ENCODE measurements at regions of chr1 and their contacts with region 1.

Region 1: DNA sequence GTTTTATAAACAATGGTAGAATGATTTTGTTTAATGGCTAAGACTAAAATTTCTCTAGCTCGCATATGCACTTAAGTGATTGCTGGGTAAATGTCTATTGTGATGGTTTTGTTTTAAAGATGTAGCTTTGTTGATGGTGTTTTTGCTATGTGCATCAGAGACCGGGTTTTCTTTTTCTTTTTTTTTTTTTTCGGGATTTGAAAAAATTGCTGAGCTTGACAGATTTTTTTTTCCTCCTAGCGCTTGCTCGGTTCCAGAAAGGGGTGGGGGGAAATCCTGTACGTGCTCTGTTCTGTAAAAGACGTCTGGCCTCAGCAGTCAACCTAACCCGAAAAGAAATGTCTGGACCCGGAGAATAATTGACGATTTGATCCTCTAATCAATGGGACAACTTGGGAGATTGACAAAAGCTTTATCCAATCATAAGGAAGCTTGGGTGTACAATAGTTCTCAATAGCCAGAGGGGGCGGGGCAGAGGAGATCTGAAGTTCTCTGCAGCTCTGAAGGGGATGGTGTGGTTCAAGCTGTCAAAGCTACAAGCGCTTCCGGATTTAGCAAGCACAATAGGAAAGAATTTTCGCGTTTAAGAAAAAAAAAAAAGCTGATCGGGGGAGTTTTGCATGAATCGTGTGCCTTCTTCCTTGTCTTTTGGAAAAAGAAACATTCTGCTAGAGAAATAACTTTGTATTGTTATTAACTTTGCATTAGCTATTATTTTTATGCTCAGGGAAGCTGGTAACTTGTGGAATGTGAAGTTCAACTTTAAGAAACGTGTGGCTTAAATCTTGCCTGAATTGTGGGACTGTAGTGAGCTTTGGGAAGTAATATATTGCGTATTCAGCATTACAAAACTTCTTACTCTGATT is 4.5 kb upstream of the NFIA start:
- DNase-seq: peak; percentile 100
- ATAC-seq: peak; percentile 62
- H3K4me3 ChIP-seq: peak overlapping the region; percentile 50 to 68
- H3K27ac ChIP-seq: peak overlapping the region; percentile 81; the same call in 1 of the 2 replicates
- H3K4me1 ChIP-seq: peaks cover 35 to 52% of the 10 kb centered on the region in 2 experiments
- H3K27me3 ChIP-seq: no peaks in the 10 kb centered on the region
- CTCF ChIP-seq: no peak
- POLR2A ChIP-seq: no peak
- RAD21 ChIP-seq: 0 out of 2 replicates have a peak, but pooled peaks have one; percentile 13

Region 2: DNA sequence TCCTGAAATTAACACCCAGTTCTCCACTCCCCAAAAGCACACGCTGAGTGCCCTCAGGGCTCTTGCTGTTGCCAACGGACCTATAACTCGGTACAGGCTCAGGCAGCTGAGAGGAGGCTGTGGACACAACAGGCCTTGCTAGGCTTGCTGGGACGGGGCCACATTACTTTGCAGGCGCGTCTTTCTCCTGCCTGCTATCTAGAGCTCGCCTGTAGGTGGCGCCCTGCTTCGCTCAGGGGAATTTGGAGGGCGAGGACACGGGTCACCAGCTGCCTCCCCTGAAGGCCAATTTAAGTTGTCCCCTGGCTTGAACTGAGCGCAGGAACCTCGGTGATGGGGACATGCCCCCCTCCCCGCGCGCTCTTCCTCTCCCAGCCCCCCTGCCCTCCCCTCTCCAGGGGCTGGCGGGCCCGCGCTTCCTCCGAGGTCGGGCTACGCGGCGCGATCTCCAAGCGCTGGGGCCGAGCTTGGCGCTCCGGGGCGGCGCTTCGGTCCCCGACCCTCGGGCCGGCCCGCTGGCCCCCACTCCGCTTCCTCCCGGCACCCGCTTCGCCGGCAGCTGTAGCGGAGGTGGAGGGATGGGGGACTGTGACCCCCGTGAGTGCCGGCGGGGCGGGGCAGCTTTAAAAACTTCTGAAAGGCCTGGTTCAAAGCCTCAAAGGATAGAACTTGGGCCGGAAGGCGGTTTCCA is 27.9 kb before region 1 on chr1:
- CTCF ChIA-PET with region 1: interaction called, 29 read pairs
- POLR2A ChIA-PET with region 1: interaction called, 3 read pairs
- RAD21 ChIA-PET with region 1: no interaction called
- intact Hi-C with region 1: no loop called
- DNase-seq: peak; percentile 73
- ATAC-seq: peak; percentile 90
- H3K4me3 ChIP-seq: peak overlapping the region; percentile 53 to 75
- H3K27ac ChIP-seq: peak overlapping the region; percentile 8; the same call in 1 of the 2 replicates
- H3K4me1 ChIP-seq: peaks cover 0 to 8% of the 10 kb centered on the region in 2 experiments; a peak in 2 of 4 replicates
- H3K27me3 ChIP-seq: no peaks in the 10 kb centered on the region
- CTCF ChIP-seq: peak; percentile 74 to 97 (median 91)
- POLR2A ChIP-seq: no peak
- RAD21 ChIP-seq: peak; percentile 87

Region 3: DNA sequence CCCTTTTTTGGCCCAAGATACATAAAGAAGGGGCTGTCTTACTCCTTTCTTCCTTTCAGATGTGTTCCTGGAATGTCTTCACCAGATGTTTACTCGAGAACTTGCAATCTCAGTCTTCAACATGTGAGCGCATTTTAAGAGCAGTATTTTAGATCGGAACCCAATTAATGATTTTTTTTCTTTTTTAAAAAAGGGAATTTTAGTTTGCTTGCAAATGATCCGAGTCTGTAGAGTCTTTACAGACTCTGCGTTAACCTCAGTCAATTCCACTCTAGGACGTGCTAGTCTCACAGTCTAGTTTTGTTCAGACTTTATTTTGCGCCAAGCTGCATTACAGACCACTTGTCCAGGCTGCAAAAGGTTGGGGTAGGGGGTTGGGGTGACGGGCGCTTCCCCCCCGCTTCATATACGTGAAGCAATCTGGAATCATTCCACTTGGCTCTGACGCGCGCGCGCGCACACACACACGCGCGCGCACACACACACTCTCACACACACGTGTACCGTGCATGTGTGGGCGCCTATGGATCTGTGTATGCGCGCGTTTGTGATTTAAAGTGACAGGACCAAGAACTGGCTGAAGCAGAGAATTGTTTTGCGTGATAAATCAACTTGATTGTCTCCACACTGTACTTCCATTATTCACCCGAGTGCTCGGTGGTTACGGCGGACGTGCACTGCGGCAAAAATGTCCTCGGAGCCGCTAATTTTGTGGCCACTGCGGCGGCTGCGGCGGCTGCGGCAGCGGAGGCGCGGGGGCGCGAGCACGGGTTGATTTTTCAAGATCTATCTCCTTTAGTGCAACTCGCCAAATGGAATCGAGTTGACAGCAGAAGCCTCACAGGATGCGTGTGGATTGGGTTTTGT is 21.1 kb before region 1 on chr1:
- CTCF ChIA-PET with region 1: interaction called, 3 read pairs
- POLR2A ChIA-PET with region 1: interaction called, 3 read pairs
- RAD21 ChIA-PET with region 1: no interaction called
- intact Hi-C with region 1: loop called (anchors 1 kb)
- DNase-seq: peak; percentile 50
- ATAC-seq: peak; percentile 51
- H3K4me3 ChIP-seq: peak overlapping the region; percentile 66 to 70
- H3K27ac ChIP-seq: peak overlapping the region; percentile 44
- H3K4me1 ChIP-seq: peaks cover 3 to 12% of the 10 kb centered on the region in 2 experiments; a peak in 2 of 4 replicates
- H3K27me3 ChIP-seq: no peaks in the 10 kb centered on the region
- CTCF ChIP-seq: no peak
- POLR2A ChIP-seq: no peak
- RAD21 ChIP-seq: no peak

Measured in HCT116 (cell line).